Endothelial cell of umbilical vein (primary cell): ENCODE measurements at regions of chr3 and their contacts with region 1.

Region 1: GRCh38 chr3:11155341-11156025 is 1.2 kb downstream of the HRH1 start:
- DNase-seq: peak; percentile 84
- H3K4me3 ChIP-seq: peak overlapping the region; percentile 53 to 79 (median 78)
- H3K27ac ChIP-seq: peak overlapping the region; percentile 62
- H3K4me1 ChIP-seq: peaks cover 13% of the 10 kb centered on the region
- H3K27me3 ChIP-seq: no peaks in the 10 kb centered on the region
- CTCF ChIP-seq: peak; percentile 65 to 86
- POLR2A ChIP-seq: no peak

Region 2: DNA sequence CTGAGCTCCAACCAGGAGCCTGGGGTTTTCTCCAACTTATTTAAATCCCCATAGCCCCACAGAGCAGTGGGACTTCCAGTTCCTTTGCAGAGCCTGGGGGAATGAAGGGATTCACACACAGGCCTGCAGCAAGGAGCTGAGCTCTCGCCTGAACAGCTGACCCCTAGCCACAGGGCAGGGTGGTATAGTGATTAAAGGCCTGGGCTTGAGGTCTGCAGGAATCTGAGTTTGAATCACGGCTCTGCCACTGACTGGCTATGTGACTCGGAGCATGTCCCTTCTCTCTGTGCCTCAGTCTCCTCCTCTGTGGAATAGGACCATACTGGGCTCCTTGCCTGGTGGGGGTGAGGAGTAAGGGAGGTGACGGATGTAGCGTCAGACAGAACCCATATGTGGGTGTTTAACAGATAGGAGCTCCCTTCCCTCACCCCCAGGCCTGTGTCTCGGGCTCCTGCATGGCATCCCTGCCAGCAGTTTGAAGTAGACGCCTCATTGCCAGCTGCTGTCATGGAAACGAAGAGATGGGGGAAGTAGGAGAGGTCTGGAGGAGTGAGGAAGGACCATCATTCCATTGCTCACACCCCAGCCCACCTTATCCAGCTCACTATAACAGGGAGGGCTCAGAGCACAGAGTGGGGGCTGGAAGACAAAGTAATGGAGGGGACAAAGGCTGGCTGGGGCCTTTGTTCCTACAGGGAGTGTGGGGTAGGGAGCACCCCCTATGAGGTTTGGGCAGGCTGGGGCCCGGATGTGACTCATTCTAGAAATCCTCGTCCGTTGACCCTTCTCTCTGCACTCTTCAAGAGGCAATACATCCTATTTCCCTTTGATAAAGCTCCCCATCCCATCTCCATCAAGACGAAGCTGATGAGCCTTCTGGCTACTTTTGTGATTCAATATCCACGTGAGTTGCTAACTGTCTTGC is 13.7 kb after region 1 on chr3:
- CTCF ChIA-PET with region 1: interaction called, 42 read pairs
- POLR2A ChIA-PET with region 1: no interaction called
- dilution Hi-C with region 1: no loop called
- intact Hi-C with region 1: no loop called
- DNase-seq: no peak
- H3K4me3 ChIP-seq: no peak overlapping the region
- H3K27ac ChIP-seq: peak overlapping the region; percentile 35
- H3K4me1 ChIP-seq: peaks cover 23% of the 10 kb centered on the region
- H3K27me3 ChIP-seq: no peaks in the 10 kb centered on the region
- CTCF ChIP-seq: no peak
- POLR2A ChIP-seq: no peak

Region 3: GRCh38 chr3:11195721-11196332 is 40.3 kb after region 1 on chr3:
- CTCF ChIA-PET with region 1: interaction called, 96 read pairs
- POLR2A ChIA-PET with region 1: interaction called, 3 read pairs
- dilution Hi-C with region 1: no loop called
- intact Hi-C with region 1: loop called (anchors 1 kb)
- DNase-seq: peak; percentile 65
- H3K4me3 ChIP-seq: no peak overlapping the region
- H3K27ac ChIP-seq: peak overlapping the region; percentile 67
- H3K4me1 ChIP-seq: peaks cover 61% of the 10 kb centered on the region
- H3K27me3 ChIP-seq: no peaks in the 10 kb centered on the region
- CTCF ChIP-seq: no peak
- POLR2A ChIP-seq: peak; percentile 65

Region 4: GRCh38 chr3:11221818-11222415 is 66.4 kb after region 1 on chr3:
- CTCF ChIA-PET with region 1: interaction called, 20 read pairs
- POLR2A ChIA-PET with region 1: no interaction called
- dilution Hi-C with region 1: no loop called
- intact Hi-C with region 1: loop called (anchors 1 kb)
- DNase-seq: no peak
- H3K4me3 ChIP-seq: no peak overlapping the region
- H3K27ac ChIP-seq: no peak overlapping the region
- H3K4me1 ChIP-seq: peaks cover 40% of the 10 kb centered on the region
- H3K27me3 ChIP-seq: no peaks in the 10 kb centered on the region
- CTCF ChIP-seq: peak; percentile 5 to 11
- POLR2A ChIP-seq: no peak

Region 5: GRCh38 chr3:11335056-11335608 is 179.6 kb after region 1 on chr3:
- CTCF ChIA-PET with region 1: interaction called, 71 read pairs
- POLR2A ChIA-PET with region 1: interaction called, 3 read pairs
- dilution Hi-C with region 1: no loop called
- intact Hi-C with region 1: loop called (anchors 1 kb)
- DNase-seq: peak; percentile 81
- H3K4me3 ChIP-seq: no peak overlapping the region
- H3K27ac ChIP-seq: no peak overlapping the region
- H3K4me1 ChIP-seq: peaks cover 15% of the 10 kb centered on the region
- H3K27me3 ChIP-seq: no peaks in the 10 kb centered on the region
- CTCF ChIP-seq: peak; percentile 41 to 56
- POLR2A ChIP-seq: no peak

Region 6: GRCh38 chr3:11770477-11771391 is 615.3 kb after region 1 on chr3:
- CTCF ChIA-PET with region 1: no interaction called
- POLR2A ChIA-PET with region 1: no interaction called
- dilution Hi-C with region 1: no loop called
- intact Hi-C with region 1: loop called (anchors 1 kb)
- DNase-seq: peak; percentile 85
- H3K4me3 ChIP-seq: no peak overlapping the region
- H3K27ac ChIP-seq: no peak overlapping the region
- H3K4me1 ChIP-seq: peaks cover 11% of the 10 kb centered on the region
- H3K27me3 ChIP-seq: no peaks in the 10 kb centered on the region
- CTCF ChIP-seq: no peak
- POLR2A ChIP-seq: no peak